Breast epithelium (tissue), 4 donors: ENCODE measurements at regions of chr1 and their contacts with region 1.

Region 1: GRCh38 chr1:19074902-19075721 is 118.6 kb upstream of the IFFO2 start:
- DNase-seq: peak in 1 of 2 donors; percentile 94
- H3K4me3 ChIP-seq: peak overlapping the region in 1 of 3 donors; percentile 19
- H3K27ac ChIP-seq: peak overlapping the region; percentile 89 to 90
- H3K4me1 ChIP-seq: peaks cover 2 to 15% of the 10 kb centered on the region in 2 donors
- H3K27me3 ChIP-seq: no peaks in the 10 kb centered on the region
- CTCF ChIP-seq: no peak
- POLR2A ChIP-seq: no peak

Region 2: DNA sequence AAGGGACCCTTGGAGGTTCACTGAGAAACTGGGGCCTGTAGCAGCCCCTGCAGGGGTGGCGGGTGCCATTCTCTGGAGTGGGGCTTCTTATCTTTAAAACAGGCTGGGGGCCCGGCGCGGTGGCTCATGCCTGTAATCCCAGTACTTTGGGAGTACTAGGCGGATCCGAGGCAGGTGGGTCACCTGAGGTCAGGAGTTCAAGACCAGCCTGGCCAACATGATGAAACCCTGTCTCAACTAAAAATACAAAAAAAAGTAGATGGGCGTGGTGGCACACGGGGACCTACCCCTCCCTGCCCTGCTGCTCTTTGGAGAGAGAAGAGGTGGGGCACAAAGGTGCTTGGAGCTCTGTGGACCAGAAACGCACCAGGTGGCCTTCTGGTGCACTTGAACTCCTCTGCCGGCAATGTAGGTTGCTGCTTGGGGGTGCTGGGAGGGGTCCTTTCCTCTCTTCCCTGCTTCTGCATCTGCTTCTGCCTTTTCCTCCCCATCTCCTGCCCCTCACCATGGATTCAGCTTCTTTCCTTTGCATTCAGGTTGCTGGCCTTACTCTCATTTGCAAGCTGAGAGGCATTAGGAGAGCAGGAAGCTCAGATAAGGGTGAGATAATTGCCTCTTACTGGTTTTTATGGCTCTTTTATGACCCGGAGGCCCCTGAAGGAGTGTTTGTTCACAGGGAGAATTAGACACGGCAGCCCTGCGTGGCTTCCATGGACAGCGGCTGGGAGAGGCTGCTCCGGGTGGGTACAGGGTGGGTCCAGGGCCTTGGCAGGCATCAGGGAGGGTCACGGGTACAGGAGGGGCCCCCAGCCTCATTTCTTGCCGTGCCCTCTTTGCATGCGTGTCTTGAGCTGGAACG is 1478.2 kb before region 1 on chr1:
- intact Hi-C with region 1: loop called (anchors 5 kb)
- DNase-seq: no peak
- H3K4me3 ChIP-seq: no peak overlapping the region
- H3K27ac ChIP-seq: no peak overlapping the region
- H3K4me1 ChIP-seq: no peaks in the 10 kb centered on the region
- H3K27me3 ChIP-seq: no peaks in the 10 kb centered on the region
- CTCF ChIP-seq: no peak
- POLR2A ChIP-seq: no peak

Region 3: GRCh38 chr1:18902523-18903290 is 172.4 kb before region 1 on chr1 and contains the start of gene ALDH4A1:
- intact Hi-C with region 1: loop called (anchors 10 kb)
- DNase-seq: peak; percentile 98 to 99
- H3K4me3 ChIP-seq: peak within 1 kb of the TSS; percentile 65 to 97 (median 73)
- H3K27ac ChIP-seq: peak within 1 kb of the TSS; percentile 90 to 96
- H3K4me1 ChIP-seq: peaks cover 0 to 7% of the 10 kb centered on the region in 2 donors
- H3K27me3 ChIP-seq: no peaks in the 10 kb centered on the region
- CTCF ChIP-seq: peak in 1 of 3 donors; percentile 19
- POLR2A ChIP-seq: no peak
- total RNA-seq, gene ALDH4A1: 15.7 to 81.0 (median 23.7) TPM

Region 4: GRCh38 chr1:19374083-19374801 is 299.1 kb after region 1 on chr1:
- intact Hi-C with region 1: no loop called
- DNase-seq: no peak
- H3K4me3 ChIP-seq: no peak overlapping the region
- H3K27ac ChIP-seq: peak overlapping the region; percentile 66 to 89
- H3K4me1 ChIP-seq: no peaks in the 10 kb centered on the region
- H3K27me3 ChIP-seq: no peaks in the 10 kb centered on the region
- CTCF ChIP-seq: no peak
- POLR2A ChIP-seq: no peak